Uterus (tissue), 4 donors: ENCODE measurements at regions of chr13 and their contacts with region 1.

Region 1: GRCh38 chr13:37587236-37587635 is 11.3 kb downstream of the POSTN start:
- DNase-seq: no peak
- H3K4me3 ChIP-seq: no peak overlapping the region
- H3K27ac ChIP-seq: no peak overlapping the region
- H3K4me1 ChIP-seq: no peaks in the 10 kb centered on the region
- H3K27me3 ChIP-seq: no peaks in the 10 kb centered on the region
- CTCF ChIP-seq: no peak
- POLR2A ChIP-seq: no peak

Region 2: GRCh38 chr13:37476874-37477273 is 110.4 kb before region 1 on chr13:
- intact Hi-C with region 1: loop called (anchors 10 kb)
- DNase-seq: no peak
- H3K4me3 ChIP-seq: no peak overlapping the region
- H3K27ac ChIP-seq: no peak overlapping the region
- H3K4me1 ChIP-seq: no peaks in the 10 kb centered on the region
- H3K27me3 ChIP-seq: no peaks in the 10 kb centered on the region
- CTCF ChIP-seq: no peak
- POLR2A ChIP-seq: no peak